ENCODE measurements at regions of chr4 and their contacts with region 1.

Region 1: GRCh38 chr4:169270810-169271691 is at the start of gene SH3RF1:
- DNase-seq: peak; percentile 56
- ATAC-seq: peak; percentile 60
- H3K4me3 Mint-ChIP-seq: peak within 1 kb of the TSS; percentile 89
- H3K27ac Mint-ChIP-seq: peak within 1 kb of the TSS; percentile 75
- H3K4me1 Mint-ChIP-seq: peaks cover 25% of the 10 kb centered on the region
- H3K27me3 Mint-ChIP-seq: peaks cover 4% of the 10 kb centered on the region
- CTCF ChIP-seq: no peak
- total RNA-seq, gene SH3RF1: 6.9 and 7.1 TPM in 2 replicates

Region 2: GRCh38 chr4:168480931-168481611 is 790.0 kb before region 1 on chr4:
- CTCF ChIA-PET with region 1: no interaction called
- POLR2A ChIA-PET with region 1: no interaction called
- intact Hi-C with region 1: loop called (anchors 10 kb)
- DNase-seq: no peak
- ATAC-seq: peak; percentile 53
- H3K4me3 Mint-ChIP-seq: peak overlapping the region; percentile 100
- H3K27ac Mint-ChIP-seq: peak overlapping the region; percentile 99
- H3K4me1 Mint-ChIP-seq: peaks cover 41% of the 10 kb centered on the region
- H3K27me3 Mint-ChIP-seq: peaks cover 3% of the 10 kb centered on the region
- CTCF ChIP-seq: no peak

Region 3: GRCh38 chr4:169099771-169100180 is 171.3 kb before region 1 on chr4:
- CTCF ChIA-PET with region 1: no interaction called
- POLR2A ChIA-PET with region 1: no interaction called
- intact Hi-C with region 1: loop called (anchors 5 kb)
- DNase-seq: no peak
- ATAC-seq: peak; percentile 6
- H3K4me3 Mint-ChIP-seq: no peak overlapping the region
- H3K27ac Mint-ChIP-seq: no peak overlapping the region
- H3K4me1 Mint-ChIP-seq: peaks cover 34% of the 10 kb centered on the region
- H3K27me3 Mint-ChIP-seq: no peaks in the 10 kb centered on the region
- CTCF ChIP-seq: no peak

Region 4: DNA sequence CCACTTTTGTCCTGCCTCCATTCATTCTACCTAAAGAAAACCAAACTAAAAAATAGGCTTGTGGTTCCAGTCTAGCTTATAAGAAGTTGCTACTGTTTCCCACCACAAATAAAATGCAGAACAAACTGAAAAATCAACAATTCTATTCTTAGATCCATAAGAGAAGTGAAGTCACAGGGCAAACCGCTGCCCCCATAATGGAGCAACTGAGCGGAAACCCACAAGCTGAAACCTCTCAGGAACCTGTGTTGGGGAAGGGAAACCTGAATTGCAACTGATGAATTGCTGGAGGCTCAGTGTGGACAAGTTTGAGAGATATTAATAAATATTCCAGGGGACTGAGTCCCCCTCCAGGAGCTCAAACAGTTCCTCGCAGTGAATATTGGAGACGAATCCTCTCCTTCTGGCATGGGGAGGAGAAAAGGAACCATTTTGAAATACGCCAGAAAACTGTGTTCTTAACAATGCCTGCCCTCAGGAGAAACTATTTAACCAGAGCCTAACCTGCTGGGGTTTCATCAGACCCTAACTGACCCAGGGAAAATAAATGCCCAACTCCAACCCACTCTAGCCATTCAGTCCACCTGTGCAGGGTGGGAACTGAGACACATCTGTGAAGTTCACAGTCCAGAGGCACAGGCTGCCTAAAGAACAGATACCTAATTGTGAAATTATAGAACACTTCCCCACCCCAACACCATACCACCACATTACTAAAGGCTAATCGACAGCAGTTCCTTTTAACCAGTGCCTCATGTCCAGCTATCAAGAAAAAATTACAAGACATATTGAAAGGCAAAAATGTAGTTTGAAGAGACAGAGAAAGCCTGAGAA is 22.5 kb after region 1 on chr4:
- CTCF ChIA-PET with region 1: no interaction called
- POLR2A ChIA-PET with region 1: interaction called, 5 read pairs
- intact Hi-C with region 1: loop called (anchors 1 kb)
- DNase-seq: no peak
- ATAC-seq: peak; percentile 77
- H3K4me3 Mint-ChIP-seq: peak overlapping the region; percentile 49
- H3K27ac Mint-ChIP-seq: peak overlapping the region; percentile 9
- H3K4me1 Mint-ChIP-seq: peaks cover 33% of the 10 kb centered on the region
- H3K27me3 Mint-ChIP-seq: no peaks in the 10 kb centered on the region
- CTCF ChIP-seq: no peak

Region 5: GRCh38 chr4:170027181-170027829 is 756.3 kb after region 1 on chr4:
- CTCF ChIA-PET with region 1: no interaction called
- POLR2A ChIA-PET with region 1: no interaction called
- intact Hi-C with region 1: loop called (anchors 5 kb)
- DNase-seq: peak; percentile 86
- ATAC-seq: peak; percentile 76
- H3K4me3 Mint-ChIP-seq: peak overlapping the region; percentile 89
- H3K27ac Mint-ChIP-seq: peak overlapping the region; percentile 47
- H3K4me1 Mint-ChIP-seq: peaks cover 13% of the 10 kb centered on the region
- H3K27me3 Mint-ChIP-seq: peaks cover 21% of the 10 kb centered on the region
- CTCF ChIP-seq: no peak

Measured in activated B cell treated with CpG ODN at 0.5 μM for 24 hours (primary cell).